Common myeloid progenitor, CD34-positive (primary cell): ENCODE measurements at regions of chr15 and their contacts with region 1.

Region 1: GRCh38 chr15:41774062-41774881 is at the start of gene MAPKBP1:
- DNase-seq: peak; percentile 99
- H3K4me3 ChIP-seq: peak within 1 kb of the TSS; percentile 67 to 93 (median 82)
- H3K27ac ChIP-seq: peak within 1 kb of the TSS; percentile 75 to 87
- H3K4me1 ChIP-seq: peaks cover 24 to 53% (median 43%) of the 10 kb centered on the region in 4 experiments
- H3K27me3 ChIP-seq: no peaks in the 10 kb centered on the region

Region 2: GRCh38 chr15:41161336-41161735 is 612.9 kb before region 1 on chr15:
- CTCF ChIA-PET with region 1: no interaction called
- POLR2A ChIA-PET with region 1: no interaction called
- DNase-seq: peak in 2 of 3 donors; percentile 15 to 19
- H3K4me3 ChIP-seq: no peak overlapping the region
- H3K27ac ChIP-seq: no peak overlapping the region
- H3K4me1 ChIP-seq: peaks cover 0 to 7% (median 6%) of the 10 kb centered on the region in 4 experiments
- H3K27me3 ChIP-seq: no peaks in the 10 kb centered on the region

Region 3: GRCh38 chr15:41795996-41796856 is 22.0 kb after region 1 on chr15:
- CTCF ChIA-PET with region 1: interaction called, 139 read pairs
- POLR2A ChIA-PET with region 1: no interaction called
- DNase-seq: peak in 1 of 3 donors; percentile 21
- H3K4me3 ChIP-seq: peak overlapping the region in 2 of 7 experiments; percentile 28 to 38
- H3K27ac ChIP-seq: no peak overlapping the region
- H3K4me1 ChIP-seq: peaks cover 4 to 48% (median 39%) of the 10 kb centered on the region in 4 experiments
- H3K27me3 ChIP-seq: no peaks in the 10 kb centered on the region

Region 4: GRCh38 chr15:41811432-41812195 is 37.3 kb after region 1 on chr15:
- CTCF ChIA-PET with region 1: interaction called, 319 read pairs
- POLR2A ChIA-PET with region 1: interaction called, 24 read pairs
- DNase-seq: peak; percentile 81 to 86 (median 82)
- H3K4me3 ChIP-seq: no peak overlapping the region
- H3K27ac ChIP-seq: no peak overlapping the region
- H3K4me1 ChIP-seq: peaks cover 0 to 30% (median 24%) of the 10 kb centered on the region in 4 experiments
- H3K27me3 ChIP-seq: no peaks in the 10 kb centered on the region

Region 5: DNA sequence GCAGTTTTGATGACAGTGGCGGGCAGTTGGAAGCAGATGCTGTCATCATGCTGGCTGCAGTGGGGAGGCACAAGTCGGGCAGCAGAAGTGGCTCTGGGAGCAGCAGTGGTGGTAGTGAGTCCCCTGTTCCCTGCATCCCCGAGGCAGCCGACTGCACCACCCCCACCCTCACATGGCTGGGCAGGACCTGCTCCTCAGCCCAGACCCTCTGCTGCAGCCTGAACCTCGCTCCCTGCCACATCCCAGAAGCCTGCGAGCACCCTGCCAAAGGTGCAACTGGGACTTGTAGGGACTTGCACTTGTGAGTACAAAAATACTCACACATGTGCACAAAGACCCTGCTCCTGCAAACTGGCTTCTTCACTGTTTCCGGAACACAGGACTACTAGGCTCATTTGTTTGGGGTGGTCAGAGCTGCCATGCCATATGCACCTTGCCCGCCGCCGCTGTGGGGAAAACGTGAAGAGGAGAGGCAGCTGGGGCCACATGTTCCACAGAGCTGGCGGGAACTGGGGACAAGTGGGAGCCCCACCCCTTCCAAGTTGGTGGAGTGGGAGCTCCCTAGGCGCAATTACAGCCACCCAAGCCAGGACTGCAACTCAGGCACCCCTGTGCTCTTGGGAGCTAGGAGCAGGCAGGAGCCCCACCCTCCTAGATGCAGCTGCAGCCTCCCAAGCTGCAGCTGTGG is 55.8 kb after region 1 on chr15:
- CTCF ChIA-PET with region 1: interaction called, 10 read pairs
- POLR2A ChIA-PET with region 1: no interaction called
- DNase-seq: no peak
- H3K4me3 ChIP-seq: no peak overlapping the region
- H3K27ac ChIP-seq: no peak overlapping the region
- H3K4me1 ChIP-seq: peaks cover 0 to 27% (median 26%) of the 10 kb centered on the region in 4 experiments
- H3K27me3 ChIP-seq: no peaks in the 10 kb centered on the region

Region 6: DNA sequence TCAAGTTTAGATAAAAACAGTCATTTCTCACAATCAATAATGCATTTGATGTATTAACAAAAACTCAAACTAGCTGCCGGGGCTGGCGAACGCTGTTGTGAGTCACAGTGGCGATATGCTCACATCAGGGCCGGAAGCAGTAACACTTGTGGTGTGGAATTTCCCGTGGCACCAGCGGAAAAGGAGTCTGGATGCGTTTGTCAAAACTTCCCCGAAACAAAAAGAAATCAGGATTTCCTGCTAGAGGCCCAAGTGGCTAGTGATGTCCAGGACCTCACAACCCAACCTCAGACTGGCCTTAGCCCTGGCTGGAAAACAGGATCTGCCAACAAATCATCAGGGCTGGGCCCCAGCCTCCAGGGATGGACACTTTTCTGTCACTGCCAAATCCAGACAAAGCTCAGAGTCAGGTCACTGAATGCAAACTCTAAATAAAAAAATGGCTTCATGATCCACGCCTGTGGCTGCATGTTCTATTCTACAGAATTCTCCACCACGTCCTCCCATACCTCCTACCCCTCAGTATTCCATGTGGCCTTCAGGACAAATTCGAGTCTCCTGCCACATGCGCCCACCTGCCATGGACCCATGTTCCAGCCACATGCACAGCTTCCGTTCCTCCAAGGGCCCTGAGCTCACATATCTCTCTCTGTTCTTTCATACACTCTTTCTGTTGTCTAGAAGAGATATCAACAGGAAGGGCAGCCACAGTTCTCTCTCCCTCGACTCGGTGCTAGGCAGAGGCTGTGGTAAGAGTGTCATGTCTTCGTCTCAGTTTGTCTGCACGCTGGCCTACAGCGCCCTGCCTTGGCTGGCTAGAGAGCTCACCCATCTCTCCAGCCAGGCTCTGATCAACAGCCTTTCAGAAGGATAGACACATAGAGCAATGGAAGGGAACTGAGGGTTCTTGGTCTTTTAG is 162.6 kb after region 1 on chr15:
- CTCF ChIA-PET with region 1: interaction called, 12 read pairs
- POLR2A ChIA-PET with region 1: no interaction called
- DNase-seq: peak; percentile 52 to 87 (median 82)
- H3K4me3 ChIP-seq: peak overlapping the region in 1 of 7 experiments; percentile 12
- H3K27ac ChIP-seq: no peak overlapping the region
- H3K4me1 ChIP-seq: peaks cover 17 to 39% (median 26%) of the 10 kb centered on the region in 4 experiments
- H3K27me3 ChIP-seq: no peaks in the 10 kb centered on the region